IMR-90 (cell line): ENCODE measurements at regions of chr11 and their contacts with region 1.

Region 1: GRCh38 chr11:23903044-23903704 is 593.7 kb upstream of the LUZP2 start:
- DNase-seq: peak; percentile 95
- ATAC-seq: peak; percentile 90
- H3K4me3 ChIP-seq: no peak overlapping the region
- H3K27ac ChIP-seq: peak overlapping the region; percentile 62
- H3K4me1 ChIP-seq: peaks cover 10% of the 10 kb centered on the region
- H3K27me3 ChIP-seq: no peaks in the 10 kb centered on the region
- CTCF ChIP-seq: no peak
- POLR2A ChIP-seq: no peak
- RAD21 ChIP-seq: peak; percentile 18; the same call in 1 of the 2 replicates

Region 2: DNA sequence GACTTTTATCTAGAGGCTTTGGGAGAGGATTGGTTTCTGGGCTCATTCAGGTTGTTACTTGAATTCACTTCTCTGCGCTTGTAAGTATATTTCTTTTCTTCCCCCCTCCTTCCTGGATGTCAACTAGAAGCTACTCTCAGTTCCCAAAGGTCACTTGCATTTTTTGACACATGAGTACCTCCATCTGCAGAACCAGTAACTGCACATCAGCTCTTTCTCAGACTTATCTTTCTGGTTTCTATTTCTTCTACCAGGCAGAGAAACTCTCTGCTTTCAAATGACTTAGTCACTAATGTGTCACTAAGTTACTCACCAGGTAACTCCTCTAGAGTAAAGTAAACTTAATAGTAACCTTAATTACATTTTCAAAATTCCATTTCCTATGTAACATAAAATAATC is 179.3 kb before region 1 on chr11:
- CTCF ChIA-PET with region 1: no interaction called
- POLR2A ChIA-PET with region 1: no interaction called
- dilution Hi-C with region 1: no loop called
- in situ Hi-C with region 1: no loop called
- intact Hi-C with region 1: no loop called
- DNase-seq: peak; percentile 43
- ATAC-seq: no peak
- H3K4me3 ChIP-seq: no peak overlapping the region
- H3K27ac ChIP-seq: no peak overlapping the region
- H3K4me1 ChIP-seq: peaks cover 2% of the 10 kb centered on the region; the same call in 1 of the 2 replicates
- H3K27me3 ChIP-seq: no peaks in the 10 kb centered on the region
- CTCF ChIP-seq: no peak
- POLR2A ChIP-seq: no peak
- RAD21 ChIP-seq: no peak

Region 3: GRCh38 chr11:23991165-23991539 is 88.0 kb after region 1 on chr11:
- CTCF ChIA-PET with region 1: no interaction called
- POLR2A ChIA-PET with region 1: no interaction called
- dilution Hi-C with region 1: no loop called
- in situ Hi-C with region 1: no loop called
- intact Hi-C with region 1: loop called (anchors 5 kb)
- DNase-seq: peak; percentile 90
- ATAC-seq: peak; percentile 68
- H3K4me3 ChIP-seq: no peak overlapping the region
- H3K27ac ChIP-seq: peak overlapping the region; percentile 96
- H3K4me1 ChIP-seq: peaks cover 21% of the 10 kb centered on the region
- H3K27me3 ChIP-seq: no peaks in the 10 kb centered on the region
- CTCF ChIP-seq: no peak
- POLR2A ChIP-seq: no peak
- RAD21 ChIP-seq: no peak